Psoas muscle (tissue), 8 donors: ENCODE measurements at regions of chr7 and their contacts with region 1.

Region 1: GRCh38 chr7:44087911-44088838 is 5.8 kb upstream of the POLM start:
- DNase-seq: peak; percentile 84 to 86
- ATAC-seq: peak; percentile 67 to 83 (median 76)
- H3K4me3 ChIP-seq: no peak overlapping the region
- H3K27ac ChIP-seq: peak overlapping the region; percentile 76
- H3K4me1 ChIP-seq: peaks cover 11% of the 10 kb centered on the region
- H3K27me3 ChIP-seq: no peaks in the 10 kb centered on the region
- CTCF ChIP-seq: no peak

Region 2: GRCh38 chr7:44123190-44124003 is 35.2 kb after region 1 on chr7 and contains the start of gene POLD2:
- intact Hi-C with region 1: loop called (anchors 5 kb)
- DNase-seq: peak; percentile 99
- ATAC-seq: peak; percentile 96 to 98 (median 96)
- H3K4me3 ChIP-seq: peak within 1 kb of the TSS; percentile 89
- H3K27ac ChIP-seq: peak within 1 kb of the TSS; percentile 93
- H3K4me1 ChIP-seq: peaks cover 25% of the 10 kb centered on the region
- H3K27me3 ChIP-seq: no peaks in the 10 kb centered on the region
- CTCF ChIP-seq: no peak
- total RNA-seq, gene POLD2: 79.2 to 127 (median 119) TPM

Region 3: DNA sequence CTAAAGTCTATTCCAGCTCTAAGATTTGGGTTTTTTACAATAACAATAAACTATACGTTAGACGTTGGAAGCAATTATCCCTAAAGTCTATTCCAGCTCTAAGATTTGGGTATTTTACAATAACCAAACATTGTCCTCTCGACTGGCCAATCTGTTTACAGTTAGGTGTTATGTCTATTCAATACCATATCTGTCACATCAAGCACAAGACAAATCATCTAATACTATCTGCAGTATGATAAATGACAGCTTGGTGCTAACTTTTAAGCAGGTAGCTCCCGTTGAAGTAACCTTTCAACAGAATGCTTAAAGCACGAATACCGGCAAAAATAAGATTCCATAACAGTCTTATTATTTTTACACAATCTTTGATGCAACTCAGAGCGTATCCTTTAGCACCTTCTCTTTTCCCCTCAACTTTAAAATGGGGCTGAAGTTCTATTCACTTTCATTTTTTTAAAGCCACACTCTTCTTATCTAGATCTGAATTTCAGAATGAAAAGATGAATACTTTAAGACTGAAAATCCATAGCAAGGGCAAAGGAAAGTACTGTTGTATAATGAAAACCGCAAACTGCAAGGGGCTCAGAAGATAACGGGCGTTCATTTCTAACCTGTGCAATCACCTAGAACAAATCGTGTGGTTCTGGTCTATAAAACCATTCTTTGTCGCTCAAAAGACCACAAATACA is 758.8 kb after region 1 on chr7:
- intact Hi-C with region 1: no loop called
- DNase-seq: no peak
- ATAC-seq: no peak
- H3K4me3 ChIP-seq: peak overlapping the region; percentile 82
- H3K27ac ChIP-seq: peak overlapping the region; percentile 95
- H3K4me1 ChIP-seq: peaks cover 34% of the 10 kb centered on the region
- H3K27me3 ChIP-seq: no peaks in the 10 kb centered on the region
- CTCF ChIP-seq: no peak